Calu3 (cell line): ENCODE measurements at regions of chr10 and their contacts with region 1.

Region 1: GRCh38 chr10:64733980-64734379 is 1212.8 kb downstream of the REEP3 start:
- DNase-seq: peak; percentile 65
- H3K4me3 Mint-ChIP-seq: no peak overlapping the region
- H3K27ac Mint-ChIP-seq: no peak overlapping the region
- H3K4me1 Mint-ChIP-seq: peaks cover 30% of the 10 kb centered on the region
- H3K27me3 Mint-ChIP-seq: no peaks in the 10 kb centered on the region
- CTCF ChIP-seq: peak; percentile 52

Region 2: GRCh38 chr10:64041185-64041988 is 692.6 kb before region 1 on chr10:
- CTCF ChIA-PET with region 1: no interaction called
- intact Hi-C with region 1: loop called (anchors 5 kb)
- DNase-seq: peak; percentile 80
- H3K4me3 Mint-ChIP-seq: peak overlapping the region; percentile 53
- H3K27ac Mint-ChIP-seq: no peak overlapping the region
- H3K4me1 Mint-ChIP-seq: peaks cover 8% of the 10 kb centered on the region
- H3K27me3 Mint-ChIP-seq: peaks cover 3% of the 10 kb centered on the region
- CTCF ChIP-seq: peak; percentile 99

Region 3: DNA sequence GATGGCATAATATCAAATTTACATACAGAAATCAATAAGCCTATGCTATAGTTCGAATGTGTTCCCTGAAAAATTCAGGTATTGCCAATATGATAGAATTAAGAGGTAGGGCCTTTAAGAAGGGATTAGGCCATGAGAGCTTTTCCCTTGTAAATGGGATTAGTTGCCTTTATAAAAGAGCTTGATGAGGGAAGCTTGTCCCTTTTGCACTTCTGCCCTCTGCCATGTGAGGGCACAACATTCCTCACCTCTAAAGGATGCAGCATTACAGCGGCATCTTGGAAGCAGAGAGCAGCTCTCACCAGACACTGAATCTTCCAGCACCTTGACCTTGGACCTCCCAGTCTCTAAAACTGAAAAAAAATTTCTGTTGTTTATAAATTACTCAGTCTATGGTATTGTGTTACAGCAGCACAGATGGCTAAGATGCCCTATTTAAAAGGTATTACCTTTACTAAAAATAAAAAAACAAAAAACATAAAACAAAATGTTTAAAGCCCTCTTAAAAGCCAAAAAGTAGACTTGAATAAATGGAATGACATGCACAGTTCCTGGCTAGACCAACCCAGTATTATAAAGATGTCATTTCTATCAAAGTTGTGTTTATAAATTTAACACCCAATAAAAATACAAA is 303.2 kb before region 1 on chr10:
- CTCF ChIA-PET with region 1: interaction called, 7 read pairs
- intact Hi-C with region 1: loop called (anchors 1 kb)
- DNase-seq: peak; percentile 74
- H3K4me3 Mint-ChIP-seq: no peak overlapping the region
- H3K27ac Mint-ChIP-seq: no peak overlapping the region
- H3K4me1 Mint-ChIP-seq: peaks cover 8% of the 10 kb centered on the region
- H3K27me3 Mint-ChIP-seq: no peaks in the 10 kb centered on the region
- CTCF ChIP-seq: peak; percentile 79

Region 4: GRCh38 chr10:64626924-64627323 is 107.1 kb before region 1 on chr10:
- CTCF ChIA-PET with region 1: no interaction called
- intact Hi-C with region 1: loop called (anchors 1 kb)
- DNase-seq: peak; percentile 72
- H3K4me3 Mint-ChIP-seq: peak overlapping the region; percentile 64
- H3K27ac Mint-ChIP-seq: peak overlapping the region; percentile 71
- H3K4me1 Mint-ChIP-seq: peaks cover 36% of the 10 kb centered on the region
- H3K27me3 Mint-ChIP-seq: no peaks in the 10 kb centered on the region
- CTCF ChIP-seq: no peak

Region 5: GRCh38 chr10:64708884-64709681 is 24.9 kb before region 1 on chr10:
- CTCF ChIA-PET with region 1: no interaction called
- intact Hi-C with region 1: no loop called
- DNase-seq: no peak
- H3K4me3 Mint-ChIP-seq: no peak overlapping the region
- H3K27ac Mint-ChIP-seq: no peak overlapping the region
- H3K4me1 Mint-ChIP-seq: no peaks in the 10 kb centered on the region
- H3K27me3 Mint-ChIP-seq: no peaks in the 10 kb centered on the region
- CTCF ChIP-seq: no peak

Region 6: DNA sequence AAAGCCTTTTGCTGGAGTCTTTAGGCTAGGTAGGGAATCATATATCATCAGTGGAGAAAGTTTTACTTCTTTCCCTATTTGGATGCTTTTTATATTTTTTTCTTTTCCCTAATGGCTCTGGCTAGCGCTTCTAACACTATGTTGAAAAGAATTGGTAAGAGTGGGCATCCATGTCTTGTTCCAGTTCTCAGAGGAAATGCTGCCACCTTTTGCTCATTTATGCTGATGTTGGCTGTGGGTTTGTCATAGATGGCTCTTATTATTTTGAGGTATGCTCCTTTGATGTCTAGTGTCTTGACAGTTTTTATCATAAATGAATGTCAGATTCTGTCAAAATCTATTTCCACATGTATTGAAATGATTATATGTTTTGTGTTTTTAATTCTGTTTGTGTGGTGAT is 331.3 kb after region 1 on chr10:
- CTCF ChIA-PET with region 1: no interaction called
- intact Hi-C with region 1: loop called (anchors 10 kb)
- DNase-seq: no peak
- H3K4me3 Mint-ChIP-seq: no peak overlapping the region
- H3K27ac Mint-ChIP-seq: no peak overlapping the region
- H3K4me1 Mint-ChIP-seq: no peaks in the 10 kb centered on the region
- H3K27me3 Mint-ChIP-seq: no peaks in the 10 kb centered on the region
- CTCF ChIP-seq: no peak

Region 7: DNA sequence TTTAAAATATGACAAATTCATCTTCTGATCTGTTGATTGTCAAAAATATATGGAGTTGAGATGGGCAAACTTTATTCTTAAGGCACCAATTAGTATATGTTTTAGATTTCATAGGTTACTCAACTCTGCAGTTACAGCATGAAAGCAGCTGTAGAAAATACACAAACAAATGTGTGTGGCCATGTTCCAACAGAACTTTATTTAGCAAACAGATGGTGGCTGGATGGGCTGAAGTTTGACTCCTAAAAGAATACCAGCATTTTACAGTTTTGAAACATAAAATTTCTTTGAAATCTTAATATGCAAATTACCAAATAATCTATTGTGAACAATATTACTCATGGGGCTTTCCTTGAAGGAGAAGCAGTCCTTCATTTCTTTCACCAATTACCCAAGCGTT is 985.8 kb after region 1 on chr10:
- CTCF ChIA-PET with region 1: no interaction called
- intact Hi-C with region 1: loop called (anchors 10 kb)
- DNase-seq: no peak
- H3K4me3 Mint-ChIP-seq: no peak overlapping the region
- H3K27ac Mint-ChIP-seq: no peak overlapping the region
- H3K4me1 Mint-ChIP-seq: peaks cover 19% of the 10 kb centered on the region
- H3K27me3 Mint-ChIP-seq: no peaks in the 10 kb centered on the region
- CTCF ChIP-seq: no peak